ENCODE measurements at regions of chr5 and their contacts with region 1.

Region 1: GRCh38 chr5:132064738-132065331 is 4.4 kb downstream of the IL3 start:
- DNase-seq: peak; percentile 78 to 84
- ATAC-seq: peak; percentile 84 to 93
- H3K4me3 ChIP-seq: no peak overlapping the region
- H3K27ac ChIP-seq: no peak overlapping the region
- H3K4me1 ChIP-seq: no peaks in the 10 kb centered on the region
- CTCF ChIP-seq: peak; percentile 73
- EP300 ChIP-seq: no peak
- POLR2A ChIP-seq: no peak
- RAD21 ChIP-seq: peak; percentile 56 to 73; a peak in 4 of 5 replicates

Region 2: DNA sequence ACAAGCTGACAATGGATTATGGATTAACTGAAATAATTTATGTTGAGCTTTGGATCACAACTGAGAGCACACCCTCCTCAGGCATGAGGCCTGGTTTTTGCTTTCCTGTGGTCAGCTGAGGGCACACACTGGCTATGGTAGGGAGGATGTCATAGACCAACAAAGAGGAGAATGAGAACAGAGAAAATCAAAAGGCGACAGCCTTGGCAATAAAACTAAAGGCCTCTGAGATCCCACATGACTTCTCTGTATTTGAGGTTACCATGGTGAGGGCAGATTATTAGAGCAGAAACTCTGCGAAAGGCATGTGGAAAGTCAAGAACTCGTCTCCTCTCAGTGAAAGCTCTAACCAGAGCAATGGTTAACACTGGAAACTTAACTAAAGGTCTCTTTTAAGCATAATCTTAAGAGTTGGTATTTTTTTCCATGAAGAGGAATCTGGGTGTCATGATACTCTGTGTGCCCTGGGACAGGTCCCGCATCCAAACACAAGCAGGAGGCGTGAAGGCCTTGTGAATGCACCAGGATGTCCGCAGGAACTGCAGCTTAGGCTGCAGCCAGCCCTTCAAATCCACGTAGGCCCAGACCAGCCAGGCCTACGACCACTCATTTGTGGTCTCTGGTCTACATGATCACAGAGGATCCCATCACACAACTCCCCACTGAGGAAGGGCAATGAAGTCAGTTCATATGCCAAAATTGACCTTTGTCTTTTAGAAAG is 107.0 kb before region 1 on chr5:
- CTCF ChIA-PET with region 1: no interaction called
- POLR2A ChIA-PET with region 1: no interaction called
- DNase-seq: no peak
- ATAC-seq: no peak
- H3K4me3 ChIP-seq: no peak overlapping the region
- H3K27ac ChIP-seq: no peak overlapping the region
- H3K4me1 ChIP-seq: no peaks in the 10 kb centered on the region
- CTCF ChIP-seq: no peak
- EP300 ChIP-seq: no peak
- POLR2A ChIP-seq: no peak
- RAD21 ChIP-seq: no peak

Region 3: GRCh38 chr5:132050136-132050535 is 14.7 kb before region 1 on chr5:
- CTCF ChIA-PET with region 1: interaction called, 60 read pairs
- POLR2A ChIA-PET with region 1: no interaction called
- DNase-seq: no peak
- ATAC-seq: no peak
- H3K4me3 ChIP-seq: no peak overlapping the region
- H3K27ac ChIP-seq: no peak overlapping the region
- H3K4me1 ChIP-seq: no peaks in the 10 kb centered on the region
- CTCF ChIP-seq: no peak
- EP300 ChIP-seq: no peak
- POLR2A ChIP-seq: no peak
- RAD21 ChIP-seq: no peak

Region 4: DNA sequence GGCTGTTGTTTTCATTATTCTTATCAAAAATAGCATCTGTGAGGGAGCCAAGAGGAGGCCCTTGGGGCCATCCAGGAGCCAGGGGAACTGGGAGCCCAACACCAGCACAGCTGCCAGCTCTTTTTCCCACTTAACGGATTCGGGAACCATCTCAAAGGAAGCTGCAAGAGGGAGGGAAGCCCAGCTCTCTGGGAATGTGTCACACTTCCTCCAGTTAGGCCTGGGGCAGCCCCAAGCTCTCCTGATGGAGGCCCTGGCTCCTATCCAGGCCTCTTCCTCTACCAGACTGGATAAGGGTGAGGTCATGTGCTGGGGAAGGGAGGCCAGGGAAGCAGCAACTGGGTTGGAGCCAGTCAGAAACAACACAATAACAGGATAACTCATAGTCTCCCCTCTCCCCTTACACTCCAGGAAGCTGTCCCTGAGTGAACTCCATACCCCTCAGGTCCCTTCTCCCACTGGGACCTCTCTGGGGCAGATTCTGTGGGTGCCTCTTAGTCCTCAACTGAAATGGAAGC is 21.5 kb after region 1 on chr5:
- CTCF ChIA-PET with region 1: interaction called, 50 read pairs
- POLR2A ChIA-PET with region 1: interaction called, 4 read pairs
- DNase-seq: peak; percentile 30 to 44
- ATAC-seq: peak; percentile 40 to 77; a peak in 3 of 6 replicates
- H3K4me3 ChIP-seq: no peak overlapping the region
- H3K27ac ChIP-seq: peak overlapping the region in 1 of 2 experiments; percentile 56; a peak in 3 of 6 replicates
- H3K4me1 ChIP-seq: peaks cover 10% of the 10 kb centered on the region; the same call in 2 of the 3 replicates
- CTCF ChIP-seq: no peak
- EP300 ChIP-seq: no peak
- POLR2A ChIP-seq: no peak
- RAD21 ChIP-seq: no peak

Region 5: GRCh38 chr5:132094393-132095076 is 29.7 kb after region 1 on chr5:
- CTCF ChIA-PET with region 1: interaction called, 32 read pairs
- POLR2A ChIA-PET with region 1: no interaction called
- DNase-seq: peak; percentile 68 to 69
- ATAC-seq: peak; percentile 81 to 85
- H3K4me3 ChIP-seq: no peak overlapping the region
- H3K27ac ChIP-seq: peak overlapping the region; percentile 28 to 64; a peak in 5 of 6 replicates
- H3K4me1 ChIP-seq: peaks cover 17% of the 10 kb centered on the region
- CTCF ChIP-seq: no peak
- EP300 ChIP-seq: no peak
- POLR2A ChIP-seq: no peak
- RAD21 ChIP-seq: no peak

Region 6: DNA sequence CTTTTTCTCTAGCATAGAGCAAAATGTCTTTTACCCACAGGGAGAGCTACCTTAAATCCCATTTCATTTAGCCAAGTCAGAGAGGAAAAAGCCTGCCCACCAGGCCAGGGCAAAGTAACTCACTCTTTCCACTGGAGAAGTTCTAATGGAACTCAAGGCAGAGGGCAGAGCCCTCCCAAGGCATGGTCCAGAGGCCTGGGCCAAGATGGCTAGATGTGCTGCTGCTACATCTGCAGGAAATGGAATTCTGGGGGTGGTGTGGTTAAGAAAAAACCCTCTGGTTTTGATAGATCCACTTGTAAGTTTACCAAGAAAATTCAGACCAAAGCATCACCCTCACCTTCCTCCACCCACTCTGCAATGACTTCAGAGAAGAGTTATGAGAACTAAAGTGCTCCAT is 46.1 kb after region 1 on chr5:
- CTCF ChIA-PET with region 1: interaction called, 13 read pairs
- POLR2A ChIA-PET with region 1: no interaction called
- DNase-seq: no peak
- ATAC-seq: no peak
- H3K4me3 ChIP-seq: no peak overlapping the region
- H3K27ac ChIP-seq: no peak overlapping the region
- H3K4me1 ChIP-seq: no peaks in the 10 kb centered on the region
- CTCF ChIP-seq: no peak
- EP300 ChIP-seq: no peak
- POLR2A ChIP-seq: no peak
- RAD21 ChIP-seq: no peak

Region 7: DNA sequence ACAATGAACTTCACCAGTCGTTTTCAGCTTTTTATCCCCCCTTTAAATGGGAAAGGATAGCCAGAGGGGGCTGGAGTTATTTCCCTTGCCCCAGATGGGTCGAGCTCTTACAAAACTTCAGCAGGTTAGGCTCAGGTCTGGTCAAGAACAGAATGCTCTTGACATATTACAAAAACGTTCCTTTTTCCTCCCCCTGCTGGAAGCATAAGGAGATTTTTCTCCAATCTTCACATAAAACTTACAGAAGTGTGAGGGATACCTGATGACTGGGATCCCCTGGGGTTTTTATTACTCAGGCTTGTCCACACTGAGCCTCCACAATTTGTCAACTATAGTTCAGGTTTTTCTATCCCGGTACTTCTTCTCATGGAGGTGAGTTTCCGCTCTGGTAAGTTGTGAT is 69.5 kb after region 1 on chr5:
- CTCF ChIA-PET with region 1: interaction called, 34 read pairs
- POLR2A ChIA-PET with region 1: no interaction called
- DNase-seq: peak; percentile 10 to 24
- ATAC-seq: peak in 1 of 2 experiments; percentile 76; a peak in 3 of 6 replicates
- H3K4me3 ChIP-seq: no peak overlapping the region
- H3K27ac ChIP-seq: no peak overlapping the region
- H3K4me1 ChIP-seq: no peaks in the 10 kb centered on the region
- CTCF ChIP-seq: peak; percentile 38; the same call in 2 of the 3 replicates
- EP300 ChIP-seq: no peak
- POLR2A ChIP-seq: no peak
- RAD21 ChIP-seq: peak; percentile 34 to 42; a peak in 3 of 5 replicates

Region 8: GRCh38 chr5:132180134-132180745 is 115.4 kb after region 1 on chr5:
- CTCF ChIA-PET with region 1: interaction called, 40 read pairs
- POLR2A ChIA-PET with region 1: no interaction called
- DNase-seq: peak; percentile 54 to 69
- ATAC-seq: peak; percentile 75 to 88
- H3K4me3 ChIP-seq: no peak overlapping the region
- H3K27ac ChIP-seq: no peak overlapping the region
- H3K4me1 ChIP-seq: 0 out of 3 replicates have a peak, but pooled peaks cover 3% of the 10 kb centered on the region
- CTCF ChIP-seq: peak; percentile 76
- EP300 ChIP-seq: no peak
- POLR2A ChIP-seq: no peak
- RAD21 ChIP-seq: peak; percentile 70 to 81

Region 9: GRCh38 chr5:132771503-132771998 is 706.7 kb after region 1 on chr5:
- CTCF ChIA-PET with region 1: no interaction called
- POLR2A ChIA-PET with region 1: no interaction called
- DNase-seq: peak in 1 of 2 experiments; percentile 17
- ATAC-seq: no peak
- H3K4me3 ChIP-seq: no peak overlapping the region
- H3K27ac ChIP-seq: no peak overlapping the region
- H3K4me1 ChIP-seq: peaks cover 7% of the 10 kb centered on the region
- CTCF ChIP-seq: no peak
- EP300 ChIP-seq: no peak
- POLR2A ChIP-seq: no peak
- RAD21 ChIP-seq: no peak

Measured in A549 (cell line).